PC-9 (cell line): ENCODE measurements at regions of chr15 and their contacts with region 1.

Region 1: DNA sequence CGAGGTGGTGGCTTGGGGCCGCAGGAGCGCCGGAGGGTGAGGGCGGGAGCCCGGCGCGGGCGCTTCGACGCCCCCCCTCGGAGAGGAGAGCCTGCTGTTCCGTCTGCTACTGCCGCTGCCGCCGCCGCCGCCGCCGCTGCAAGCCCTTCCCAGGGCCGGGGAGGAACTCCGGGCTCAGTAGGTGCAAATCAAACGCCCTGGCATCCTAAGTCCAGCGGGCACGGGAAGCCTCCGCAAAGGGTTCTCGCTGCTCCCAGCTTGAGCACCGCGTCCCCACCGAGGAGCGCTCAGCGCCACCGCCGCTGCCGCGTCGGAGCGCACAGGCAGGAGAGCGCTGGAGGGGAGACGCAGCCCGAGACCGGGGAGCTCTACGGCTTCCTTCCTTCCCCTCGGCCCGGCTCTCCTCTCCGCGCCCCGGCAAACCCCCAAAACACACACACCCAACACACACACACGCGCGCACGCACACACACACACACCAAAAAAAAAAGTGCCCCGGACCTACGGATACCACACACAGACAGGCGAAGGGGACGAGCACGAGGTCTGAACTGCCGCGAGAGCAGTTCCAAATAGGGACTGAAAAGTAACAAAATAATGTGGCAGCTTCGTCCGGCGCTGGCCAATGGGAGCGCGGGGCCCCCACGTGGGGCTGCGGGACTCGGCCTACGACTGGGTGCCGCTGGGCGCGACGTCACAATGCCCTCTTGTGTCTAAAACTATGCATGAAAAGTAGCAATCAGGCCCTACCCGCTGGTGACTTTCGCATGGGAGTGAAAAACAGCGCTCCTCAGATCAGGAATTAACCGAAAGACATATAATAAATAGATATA is at the start of gene TLE3:
- DNase-seq: peak; percentile 91 to 97
- H3K4me3 ChIP-seq: peak within 1 kb of the TSS; percentile 84
- H3K27ac ChIP-seq: peak within 1 kb of the TSS; percentile 78
- H3K4me1 ChIP-seq: peaks cover 48% of the 10 kb centered on the region
- H3K27me3 ChIP-seq: no peaks in the 10 kb centered on the region
- CTCF ChIP-seq: peak; percentile 55; the same call in 1 of the 2 replicates
- total RNA-seq, gene TLE3: 51.3 and 72.4 TPM in 2 replicates

Region 2: GRCh38 chr15:69480932-69481658 is 616.5 kb before region 1 on chr15:
- CTCF ChIA-PET with region 1: interaction called, 4 read pairs
- POLR2A ChIA-PET with region 1: no interaction called
- intact Hi-C with region 1: loop called (anchors 2 kb)
- DNase-seq: peak; percentile 76 to 95
- H3K4me3 ChIP-seq: no peak overlapping the region
- H3K27ac ChIP-seq: peak overlapping the region; percentile 70
- H3K4me1 ChIP-seq: peaks cover 43% of the 10 kb centered on the region
- H3K27me3 ChIP-seq: no peaks in the 10 kb centered on the region
- CTCF ChIP-seq: no peak

Region 3: GRCh38 chr15:69853581-69853980 is 244.0 kb before region 1 on chr15:
- CTCF ChIA-PET with region 1: no interaction called
- POLR2A ChIA-PET with region 1: no interaction called
- intact Hi-C with region 1: loop called (anchors 2 kb)
- DNase-seq: peak; percentile 85 to 92
- H3K4me3 ChIP-seq: no peak overlapping the region
- H3K27ac ChIP-seq: peak overlapping the region; percentile 91
- H3K4me1 ChIP-seq: peaks cover 38% of the 10 kb centered on the region
- H3K27me3 ChIP-seq: no peaks in the 10 kb centered on the region
- CTCF ChIP-seq: no peak

Region 4: GRCh38 chr15:69881766-69882165 is 215.8 kb before region 1 on chr15:
- CTCF ChIA-PET with region 1: no interaction called
- POLR2A ChIA-PET with region 1: no interaction called
- intact Hi-C with region 1: no loop called
- DNase-seq: no peak
- H3K4me3 ChIP-seq: no peak overlapping the region
- H3K27ac ChIP-seq: no peak overlapping the region
- H3K4me1 ChIP-seq: 0 out of 2 replicates have a peak, but pooled peaks cover 8% of the 10 kb centered on the region
- H3K27me3 ChIP-seq: no peaks in the 10 kb centered on the region
- CTCF ChIP-seq: no peak

Region 5: DNA sequence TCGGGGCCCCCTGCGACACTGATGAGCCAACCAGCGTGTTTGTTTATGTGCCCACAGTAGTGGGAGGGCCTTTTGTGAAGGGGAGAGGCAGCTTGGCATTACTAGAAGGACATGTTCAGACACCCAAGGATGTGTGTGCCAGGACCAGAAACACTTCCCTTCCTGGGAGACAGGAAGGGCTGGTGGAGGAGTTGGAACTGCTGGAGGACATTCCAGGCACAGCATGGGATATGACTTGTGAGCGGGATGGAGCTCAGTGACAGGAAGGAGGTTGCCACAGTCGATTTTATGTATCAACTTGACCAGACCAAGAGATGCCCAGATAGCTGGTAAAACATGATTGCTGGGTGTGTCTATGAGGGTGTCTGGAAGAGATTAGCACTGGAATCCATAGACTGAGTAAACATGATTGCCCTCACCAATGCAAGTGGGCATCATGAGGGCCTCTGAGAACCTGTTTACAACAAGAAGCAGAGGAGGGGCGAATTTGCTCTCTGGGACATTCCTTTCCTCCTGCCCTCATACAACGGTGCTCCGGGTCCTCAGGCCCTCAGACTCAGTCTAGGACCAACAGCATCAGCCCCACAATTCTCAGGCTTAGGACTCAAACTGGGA is 106.5 kb after region 1 on chr15:
- CTCF ChIA-PET with region 1: no interaction called
- POLR2A ChIA-PET with region 1: interaction called, 21 read pairs
- intact Hi-C with region 1: no loop called
- DNase-seq: no peak
- H3K4me3 ChIP-seq: no peak overlapping the region
- H3K27ac ChIP-seq: no peak overlapping the region
- H3K4me1 ChIP-seq: 0 out of 2 replicates have a peak, but pooled peaks cover 5% of the 10 kb centered on the region
- H3K27me3 ChIP-seq: no peaks in the 10 kb centered on the region
- CTCF ChIP-seq: no peak

Region 6: DNA sequence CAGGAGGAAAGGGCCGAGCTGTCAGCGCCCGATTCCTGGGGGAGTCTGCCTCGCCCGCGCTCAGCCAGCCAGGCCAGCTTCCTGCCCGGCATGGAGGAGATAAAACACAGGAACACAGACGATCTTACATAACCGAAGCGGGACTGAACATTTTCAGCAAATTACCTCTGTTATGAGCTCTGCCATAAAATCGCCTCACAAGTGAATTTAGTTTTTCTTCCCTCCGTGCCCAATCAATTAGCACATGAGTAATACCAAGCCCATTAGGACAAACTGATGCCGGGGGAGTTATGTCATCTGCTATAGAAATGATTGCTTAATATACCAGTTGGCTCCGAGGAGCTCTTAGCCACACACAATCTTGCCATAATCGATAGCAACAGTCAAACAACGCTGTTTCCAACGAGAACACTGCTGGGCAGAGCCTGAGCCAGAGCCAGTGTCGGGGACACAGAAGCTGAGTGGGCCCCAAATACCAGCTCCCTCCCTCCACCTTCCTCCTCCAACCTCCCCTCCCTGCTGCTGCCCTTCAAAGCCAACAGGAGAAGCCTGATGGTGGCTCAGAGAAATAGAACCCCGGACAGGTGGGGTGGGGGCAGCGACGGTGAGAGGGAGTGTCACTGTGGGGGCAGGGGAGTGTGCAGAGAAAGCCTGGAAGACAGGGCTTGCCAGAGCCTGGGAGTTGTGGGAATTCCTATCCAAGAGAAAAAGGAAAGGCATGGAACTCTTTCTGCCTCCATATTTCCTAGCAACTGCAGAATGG is 279.6 kb after region 1 on chr15:
- CTCF ChIA-PET with region 1: no interaction called
- POLR2A ChIA-PET with region 1: interaction called, 12 read pairs
- intact Hi-C with region 1: loop called (anchors 10 kb)
- DNase-seq: no peak
- H3K4me3 ChIP-seq: no peak overlapping the region
- H3K27ac ChIP-seq: no peak overlapping the region
- H3K4me1 ChIP-seq: peaks cover 30% of the 10 kb centered on the region
- H3K27me3 ChIP-seq: no peaks in the 10 kb centered on the region
- CTCF ChIP-seq: no peak

Region 7: DNA sequence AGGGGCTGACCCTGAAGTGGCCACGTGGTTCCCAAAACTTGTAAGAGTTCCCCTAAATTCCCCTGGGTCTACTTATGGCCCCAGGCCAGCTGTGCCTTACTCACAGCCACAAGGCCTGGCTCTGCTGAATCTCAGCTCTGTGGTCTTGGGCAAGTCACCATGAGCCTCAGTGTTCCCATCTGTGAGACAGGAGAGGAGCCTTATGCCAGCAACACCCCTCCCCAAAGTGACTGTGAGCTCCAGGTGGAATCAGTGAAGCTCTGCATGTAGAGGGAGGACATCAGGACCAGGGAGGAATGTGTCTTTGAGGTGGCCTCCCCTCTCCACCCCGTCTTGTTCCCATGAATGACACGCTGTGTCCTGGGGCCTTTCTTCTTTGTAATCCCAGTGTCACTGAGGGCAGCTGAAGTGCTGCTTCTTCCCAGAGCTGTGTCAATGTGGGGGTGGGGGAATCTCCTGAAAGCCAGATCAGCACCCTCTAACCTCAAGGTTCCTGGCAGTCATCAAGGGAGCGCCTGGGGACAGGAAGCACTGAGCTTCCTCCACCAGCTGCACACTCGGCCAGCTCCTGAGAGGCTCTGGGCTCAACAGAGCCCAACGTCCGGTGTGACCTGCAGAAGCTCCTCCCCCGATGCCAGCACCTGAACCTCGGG is 406.9 kb after region 1 on chr15:
- CTCF ChIA-PET with region 1: no interaction called
- POLR2A ChIA-PET with region 1: interaction called, 5 read pairs
- intact Hi-C with region 1: loop called (anchors 1 kb)
- DNase-seq: peak; percentile 72 to 86
- H3K4me3 ChIP-seq: no peak overlapping the region
- H3K27ac ChIP-seq: peak overlapping the region; percentile 99
- H3K4me1 ChIP-seq: peaks cover 59% of the 10 kb centered on the region
- H3K27me3 ChIP-seq: no peaks in the 10 kb centered on the region
- CTCF ChIP-seq: no peak

Region 8: GRCh38 chr15:70818580-70818979 is 721.0 kb after region 1 on chr15:
- CTCF ChIA-PET with region 1: no interaction called
- POLR2A ChIA-PET with region 1: interaction called, 14 read pairs
- intact Hi-C with region 1: no loop called
- DNase-seq: no peak
- H3K4me3 ChIP-seq: no peak overlapping the region
- H3K27ac ChIP-seq: no peak overlapping the region
- H3K4me1 ChIP-seq: no peaks in the 10 kb centered on the region
- H3K27me3 ChIP-seq: no peaks in the 10 kb centered on the region
- CTCF ChIP-seq: no peak